HEK293 (cell line): ENCODE measurements at regions of chr11 and their contacts with region 1.

Region 1: DNA sequence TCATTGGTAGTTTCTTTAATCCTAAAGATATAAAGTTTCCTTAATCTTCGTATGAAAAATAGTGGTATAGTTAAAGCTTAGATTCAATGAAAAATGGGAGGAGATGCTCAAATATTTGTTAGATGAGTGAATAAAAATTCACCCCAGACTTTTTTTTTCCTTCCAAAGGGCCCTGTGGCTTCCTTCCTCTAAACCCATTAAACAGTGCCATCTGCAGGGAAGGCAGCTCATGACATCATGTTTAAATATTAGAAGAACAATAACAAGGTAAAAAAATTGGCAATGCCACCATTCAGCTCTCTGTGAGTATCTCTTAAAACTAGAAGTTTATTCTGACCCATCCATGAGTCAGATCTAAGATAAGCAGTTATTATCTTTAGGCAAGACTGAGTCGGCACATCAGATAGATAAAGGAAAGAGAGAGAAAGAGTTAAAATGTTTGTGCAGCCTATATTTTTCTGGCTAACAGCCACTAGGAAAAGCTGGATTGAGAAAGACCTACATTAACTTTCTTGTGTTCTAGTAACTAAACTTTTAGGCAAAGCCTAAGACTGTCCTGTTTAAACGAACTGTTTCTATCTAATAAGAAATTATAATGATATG is 19.1 kb upstream of the OOSP1 start:
- H3K4me3 ChIP-seq: no peak overlapping the region
- H3K27ac ChIP-seq: no peak overlapping the region
- H3K4me1 ChIP-seq: no peaks in the 10 kb centered on the region
- CTCF ChIP-seq: no peak

Region 2: GRCh38 chr11:59822989-59823566 is 96.0 kb before region 1 on chr11:
- CTCF ChIA-PET with region 1: interaction called, 28 read pairs
- POLR2A ChIA-PET with region 1: no interaction called
- H3K4me3 ChIP-seq: no peak overlapping the region
- H3K27ac ChIP-seq: no peak overlapping the region
- H3K4me1 ChIP-seq: no peaks in the 10 kb centered on the region
- CTCF ChIP-seq: peak; percentile 20; the same call in 1 of the 2 replicates

Region 3: DNA sequence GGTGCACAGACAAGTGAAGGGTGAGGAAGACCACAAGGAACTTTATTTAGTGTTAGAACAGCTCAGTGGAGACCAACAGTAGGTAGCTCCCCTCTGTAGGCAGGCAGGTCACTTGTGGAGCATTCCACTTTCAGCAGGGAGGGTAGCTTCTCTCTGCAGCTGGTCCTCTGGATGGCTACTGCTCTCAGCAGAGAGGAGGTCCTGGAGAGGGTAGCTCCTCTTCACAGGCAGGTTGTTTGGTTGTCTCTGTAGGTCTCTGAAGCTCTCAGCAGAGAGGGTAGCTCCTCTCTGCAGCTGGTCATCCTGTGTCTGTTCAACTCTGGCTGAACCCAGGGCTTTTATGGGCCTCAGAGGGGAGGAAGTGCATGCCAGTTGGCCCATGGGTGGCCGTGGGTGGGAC is 12.6 kb after region 1 on chr11:
- CTCF ChIA-PET with region 1: interaction called, 12 read pairs
- POLR2A ChIA-PET with region 1: no interaction called
- H3K4me3 ChIP-seq: no peak overlapping the region
- H3K27ac ChIP-seq: no peak overlapping the region
- H3K4me1 ChIP-seq: no peaks in the 10 kb centered on the region
- CTCF ChIP-seq: no peak

Region 4: DNA sequence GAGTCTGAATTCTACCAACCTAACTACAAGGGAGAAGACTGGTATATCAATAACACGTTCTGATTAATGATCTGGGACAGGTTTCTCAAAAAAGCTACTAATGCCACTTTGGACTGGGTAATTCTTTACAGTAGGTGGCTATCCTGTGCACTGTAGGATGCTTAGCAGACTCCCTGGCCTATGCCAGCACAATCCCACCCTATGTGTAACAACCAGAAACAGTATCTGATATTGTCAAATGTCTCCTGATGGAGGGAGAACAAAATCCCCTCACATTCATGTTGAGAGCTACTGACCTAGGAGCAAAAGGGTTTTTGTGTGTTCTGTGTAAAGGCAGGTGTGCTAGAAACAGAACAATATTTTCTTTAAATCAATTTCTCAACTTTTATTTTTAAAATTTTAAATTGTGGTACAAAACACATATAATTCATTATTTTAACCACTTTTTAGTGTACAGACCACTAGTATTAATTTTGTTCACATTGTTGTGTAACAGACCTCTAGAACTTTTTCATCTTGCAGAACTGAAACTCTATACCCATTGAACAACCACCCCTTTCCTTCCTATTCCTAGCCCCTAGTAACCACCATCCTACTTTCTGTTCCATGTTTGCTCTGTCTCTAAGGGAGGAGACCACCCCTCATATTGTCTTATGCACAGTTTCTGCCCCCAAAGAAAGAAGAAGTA is 265.9 kb after region 1 on chr11:
- CTCF ChIA-PET with region 1: no interaction called
- POLR2A ChIA-PET with region 1: no interaction called
- H3K4me3 ChIP-seq: no peak overlapping the region
- H3K27ac ChIP-seq: no peak overlapping the region
- H3K4me1 ChIP-seq: no peaks in the 10 kb centered on the region
- CTCF ChIP-seq: no peak